Activated CD8-positive, alpha-beta memory T cell treated with anti-CD3 and anti-CD28 coated beads, Interleukin-2, amount 10 ng/mL, durations not matched to agents 7 days and 5 days (primary cell): ENCODE measurements at regions of chr5 and their contacts with region 1.

Region 1: DNA sequence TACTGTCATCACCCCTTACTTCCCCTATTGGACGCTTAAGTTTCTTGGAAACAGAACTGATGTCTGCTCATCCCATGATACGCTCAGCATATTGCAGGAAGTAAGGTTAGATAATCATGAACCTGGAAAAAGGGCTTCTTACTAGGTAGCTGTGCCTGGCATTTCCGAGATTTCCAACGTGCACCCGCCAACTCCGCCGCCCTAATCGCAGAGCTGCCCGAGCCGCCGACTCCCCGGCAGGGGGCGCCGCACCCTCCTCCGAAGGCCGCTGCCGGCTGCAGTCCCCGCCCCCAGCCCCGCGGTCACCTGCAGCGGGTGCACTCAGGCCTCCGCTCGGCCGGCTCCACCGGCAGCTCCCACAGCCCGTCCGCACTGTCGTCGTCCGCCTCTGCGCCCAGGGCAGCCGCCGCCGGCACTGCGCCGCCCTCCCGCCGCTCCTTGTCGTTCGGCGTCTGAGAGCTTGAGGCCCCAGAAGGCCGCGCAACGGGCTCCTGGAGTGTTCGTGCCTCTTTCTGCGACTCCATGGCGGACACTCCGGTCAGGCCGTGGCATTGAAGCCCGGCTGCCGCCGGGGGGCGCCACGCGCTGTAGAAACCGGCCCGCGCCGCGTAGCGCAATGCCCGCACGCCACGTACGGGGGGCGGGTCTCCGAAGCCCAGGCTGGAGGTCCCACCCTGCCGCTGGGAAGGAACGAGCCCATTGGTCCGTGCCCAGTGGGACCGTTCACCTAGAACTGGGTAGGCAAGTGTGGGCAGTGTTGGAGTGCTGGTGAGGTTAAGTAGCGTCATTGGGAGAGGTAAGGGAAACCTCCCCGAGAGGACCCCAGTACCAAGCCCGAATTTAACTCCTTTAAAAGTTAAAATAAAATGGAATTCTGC is at the start of gene DTWD2:
- DNase-seq: peak; percentile 92
- ATAC-seq: peak; percentile 95
- H3K4me3 Mint-ChIP-seq: peak within 1 kb of the TSS; percentile 75
- H3K27ac Mint-ChIP-seq: peak within 1 kb of the TSS; percentile 59
- H3K4me1 Mint-ChIP-seq: peaks cover 13% of the 10 kb centered on the region
- H3K27me3 Mint-ChIP-seq: no peaks in the 10 kb centered on the region
- total RNA-seq, gene DTWD2: 1.5 to 2.6 TPM

Region 2: DNA sequence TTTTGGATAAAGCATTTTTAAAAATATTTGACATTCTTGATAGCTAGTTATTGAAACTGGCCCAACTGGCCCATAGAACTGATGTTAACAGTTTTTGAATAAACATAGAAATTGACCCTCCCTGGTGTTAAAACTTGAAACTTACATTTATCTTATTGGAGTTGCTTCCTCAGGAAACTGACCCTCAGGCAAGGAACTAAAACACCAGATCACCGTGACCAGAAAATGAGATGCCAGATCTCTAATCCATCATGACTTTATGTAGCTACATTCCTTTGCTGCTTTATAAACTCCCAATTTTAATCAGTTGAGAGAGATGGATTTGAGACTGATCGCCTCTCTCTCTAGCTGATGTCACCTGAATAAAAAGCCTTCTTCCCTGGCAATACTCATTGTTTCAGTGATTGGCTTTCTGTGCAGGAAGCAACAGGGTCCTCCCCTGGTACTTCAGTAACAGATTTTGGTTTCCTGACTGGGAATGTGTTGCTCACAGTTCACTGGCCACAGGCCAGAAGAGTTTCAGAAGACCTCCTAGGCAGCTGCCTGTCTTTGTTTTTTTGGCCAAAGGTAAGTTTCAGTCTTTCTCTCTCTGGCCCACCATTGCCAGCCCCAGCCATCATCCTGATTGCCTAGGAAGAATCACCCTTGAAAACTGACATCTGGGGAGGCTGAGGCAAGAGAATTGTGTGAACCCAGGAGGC is 212.3 kb before region 1 on chr5:
- CTCF ChIA-PET with region 1: no interaction called
- DNase-seq: no peak
- ATAC-seq: no peak
- H3K4me3 Mint-ChIP-seq: no peak overlapping the region
- H3K27ac Mint-ChIP-seq: no peak overlapping the region
- H3K4me1 Mint-ChIP-seq: no peaks in the 10 kb centered on the region
- H3K27me3 Mint-ChIP-seq: no peaks in the 10 kb centered on the region

Region 3: GRCh38 chr5:118873417-118873816 is 114.8 kb before region 1 on chr5:
- CTCF ChIA-PET with region 1: no interaction called
- DNase-seq: no peak
- ATAC-seq: no peak
- H3K4me3 Mint-ChIP-seq: no peak overlapping the region
- H3K27ac Mint-ChIP-seq: no peak overlapping the region
- H3K4me1 Mint-ChIP-seq: no peaks in the 10 kb centered on the region
- H3K27me3 Mint-ChIP-seq: no peaks in the 10 kb centered on the region

Region 4: DNA sequence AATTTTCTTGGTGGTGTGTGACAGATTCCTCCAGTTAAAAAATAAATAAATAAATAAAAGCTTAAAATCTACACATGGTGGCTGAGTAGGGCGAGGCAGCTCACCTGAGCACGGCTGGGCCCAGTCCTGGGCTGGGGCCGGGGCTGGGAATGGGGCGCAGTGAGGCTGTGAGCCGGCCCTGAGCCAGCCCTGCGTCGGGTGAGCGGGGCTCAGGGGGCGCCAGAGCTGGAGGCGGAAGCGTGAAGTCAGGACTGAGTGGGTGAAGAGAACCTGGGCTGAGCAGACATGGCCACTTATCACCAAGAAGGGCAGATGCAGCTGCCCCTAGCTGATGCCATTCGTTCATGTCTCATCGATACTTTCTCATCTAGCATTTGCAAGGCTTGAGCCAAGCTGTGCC is 23.0 kb after region 1 on chr5:
- CTCF ChIA-PET with region 1: interaction called, 13 read pairs
- DNase-seq: no peak
- ATAC-seq: no peak
- H3K4me3 Mint-ChIP-seq: no peak overlapping the region
- H3K27ac Mint-ChIP-seq: no peak overlapping the region
- H3K4me1 Mint-ChIP-seq: no peaks in the 10 kb centered on the region
- H3K27me3 Mint-ChIP-seq: no peaks in the 10 kb centered on the region

Region 5: DNA sequence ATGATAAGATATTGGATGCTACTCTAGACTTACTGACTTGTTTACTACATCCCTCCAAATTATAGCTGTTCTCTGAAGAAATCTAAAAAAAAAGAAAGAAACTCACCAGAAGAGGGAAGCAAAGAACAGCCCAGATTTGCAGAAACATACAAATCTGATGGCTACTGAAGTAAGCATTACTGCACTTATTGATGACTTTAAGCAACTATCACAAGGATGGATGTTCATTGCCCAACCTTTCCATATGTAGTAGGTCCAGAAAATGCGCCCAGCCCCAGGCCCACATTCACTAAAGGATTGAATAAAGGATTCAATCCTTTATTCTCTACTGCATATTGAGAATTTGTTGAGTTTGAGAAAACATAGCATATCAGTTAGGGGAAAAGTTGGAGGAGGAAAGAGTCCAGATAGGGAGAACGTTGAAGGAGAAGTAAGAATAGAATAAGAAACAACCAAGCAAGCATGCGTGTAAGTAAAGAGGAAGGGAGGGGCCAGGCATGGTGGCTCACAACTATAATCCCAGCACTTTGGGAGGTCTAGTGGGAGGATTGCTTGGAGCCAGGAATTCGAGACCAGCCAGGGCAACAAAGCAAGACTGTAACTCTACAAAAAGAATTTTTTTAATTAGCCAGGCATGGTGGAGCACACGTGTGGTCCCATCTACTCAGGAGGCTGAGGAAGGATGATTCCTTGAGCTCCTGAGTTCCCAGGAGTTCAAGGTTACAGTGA is 34.0 kb after region 1 on chr5:
- CTCF ChIA-PET with region 1: interaction called, 11 read pairs
- DNase-seq: no peak
- ATAC-seq: peak; percentile 60
- H3K4me3 Mint-ChIP-seq: no peak overlapping the region
- H3K27ac Mint-ChIP-seq: no peak overlapping the region
- H3K4me1 Mint-ChIP-seq: no peaks in the 10 kb centered on the region
- H3K27me3 Mint-ChIP-seq: no peaks in the 10 kb centered on the region

Region 6: DNA sequence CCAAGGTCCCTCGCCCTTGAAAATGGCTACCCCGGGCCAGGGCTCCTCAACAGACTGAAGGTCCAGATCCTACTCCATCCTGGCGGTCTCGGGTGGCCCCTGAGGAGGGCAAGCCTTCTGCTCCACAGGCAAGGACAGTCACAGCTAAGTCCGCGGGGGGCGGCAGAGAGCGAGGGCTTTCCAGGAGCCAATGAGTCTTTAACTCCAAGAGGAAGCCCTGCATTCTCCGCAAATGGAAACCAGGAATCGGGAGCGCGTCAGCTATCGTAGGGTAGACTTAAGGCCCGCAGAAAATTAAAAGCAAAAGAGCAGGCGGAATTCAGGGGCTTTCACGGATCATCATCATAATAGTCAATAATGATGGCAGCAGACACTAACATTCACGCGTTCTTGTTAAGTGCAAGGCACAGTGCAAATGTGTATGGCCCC is 279.7 kb after region 1 on chr5:
- CTCF ChIA-PET with region 1: interaction called, 20 read pairs
- DNase-seq: peak; percentile 90
- ATAC-seq: peak; percentile 64
- H3K4me3 Mint-ChIP-seq: peak overlapping the region; percentile 97
- H3K27ac Mint-ChIP-seq: peak overlapping the region; percentile 91
- H3K4me1 Mint-ChIP-seq: peaks cover 42% of the 10 kb centered on the region
- H3K27me3 Mint-ChIP-seq: no peaks in the 10 kb centered on the region

Region 7: GRCh38 chr5:119315516-119315949 is 327.3 kb after region 1 on chr5:
- CTCF ChIA-PET with region 1: interaction called, 16 read pairs
- DNase-seq: peak; percentile 76
- ATAC-seq: peak; percentile 73
- H3K4me3 Mint-ChIP-seq: no peak overlapping the region
- H3K27ac Mint-ChIP-seq: peak overlapping the region; percentile 83
- H3K4me1 Mint-ChIP-seq: peaks cover 90% of the 10 kb centered on the region
- H3K27me3 Mint-ChIP-seq: no peaks in the 10 kb centered on the region

Region 8: DNA sequence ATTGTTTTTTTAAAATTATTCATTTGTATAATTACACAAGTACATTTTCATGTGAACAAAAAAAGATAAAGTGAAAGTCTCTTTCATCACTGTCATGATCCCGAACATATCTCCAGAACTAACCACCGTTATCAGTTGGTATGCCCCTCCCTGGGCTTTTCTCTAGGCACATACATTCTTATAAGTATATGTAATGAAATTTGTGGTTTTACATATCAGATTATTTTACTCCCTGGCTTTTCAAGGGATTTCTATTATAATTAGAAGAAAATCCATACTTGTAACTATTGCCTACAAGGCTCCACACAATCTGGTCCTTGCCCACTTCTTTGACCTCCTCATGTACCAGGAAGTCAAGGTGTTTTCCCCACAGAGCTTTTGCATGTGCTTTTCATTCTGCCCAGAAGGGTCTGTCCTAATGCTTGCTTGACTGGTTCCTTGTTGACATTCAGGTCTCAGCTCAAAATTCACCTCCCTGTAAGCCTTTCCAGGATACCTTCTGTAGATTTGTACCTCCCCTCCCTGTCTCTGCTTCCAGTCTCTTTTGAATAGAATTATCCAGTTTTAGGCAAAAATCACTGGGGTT is 430.4 kb after region 1 on chr5:
- CTCF ChIA-PET with region 1: interaction called, 112 read pairs
- DNase-seq: no peak
- ATAC-seq: no peak
- H3K4me3 Mint-ChIP-seq: no peak overlapping the region
- H3K27ac Mint-ChIP-seq: no peak overlapping the region
- H3K4me1 Mint-ChIP-seq: peaks cover 9% of the 10 kb centered on the region
- H3K27me3 Mint-ChIP-seq: peaks cover 2% of the 10 kb centered on the region

Region 9: DNA sequence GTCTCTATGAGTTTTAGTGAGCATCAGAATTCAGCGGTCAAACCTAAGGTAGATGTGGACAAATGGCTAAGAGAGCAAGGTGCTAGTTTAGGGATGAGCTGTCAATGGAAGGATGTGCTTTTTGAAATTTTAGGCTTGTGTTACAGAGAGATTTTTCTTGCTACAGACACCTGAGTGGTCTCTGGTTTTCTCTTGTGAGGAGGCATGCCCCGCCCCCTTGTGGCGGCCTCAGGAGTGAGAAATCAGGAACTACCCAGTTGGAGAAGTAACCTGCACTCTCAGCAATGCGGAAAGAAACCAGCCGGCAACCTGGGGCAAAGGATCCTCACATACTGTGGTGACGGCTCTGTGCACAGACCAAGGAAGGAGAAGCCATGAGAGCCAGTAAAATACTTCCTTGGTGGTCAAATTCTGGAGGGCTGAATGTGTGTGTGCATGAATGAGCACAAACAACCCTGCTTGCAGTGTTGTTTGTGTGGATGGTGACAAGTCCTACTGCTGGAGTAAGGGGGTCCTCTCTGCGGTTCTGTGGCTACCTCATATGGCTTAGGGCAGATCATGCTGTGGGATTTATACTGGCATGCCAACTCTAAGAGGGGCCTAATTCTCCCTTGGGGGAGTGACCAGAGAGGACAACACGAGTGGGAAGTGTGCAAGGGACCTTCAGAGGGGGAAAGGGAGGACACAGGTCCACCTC is 447.4 kb after region 1 on chr5:
- CTCF ChIA-PET with region 1: interaction called, 29 read pairs
- DNase-seq: peak; percentile 80
- ATAC-seq: peak; percentile 84
- H3K4me3 Mint-ChIP-seq: no peak overlapping the region
- H3K27ac Mint-ChIP-seq: no peak overlapping the region
- H3K4me1 Mint-ChIP-seq: peaks cover 12% of the 10 kb centered on the region
- H3K27me3 Mint-ChIP-seq: peaks cover 13% of the 10 kb centered on the region